Right cardiac atrium (tissue), 5 donors: ENCODE measurements at regions of chr15 and their contacts with region 1.

Region 1: GRCh38 chr15:48459571-48460470 is 128.6 kb downstream of the DUT start:
- DNase-seq: no peak
- ATAC-seq: peak in 1 of 2 donors; percentile 53
- H3K4me3 ChIP-seq: no peak overlapping the region
- H3K27ac ChIP-seq: no peak overlapping the region
- H3K4me1 ChIP-seq: no peaks in the 10 kb centered on the region
- H3K27me3 ChIP-seq: no peaks in the 10 kb centered on the region

Region 2: GRCh38 chr15:48352474-48353072 is 107.2 kb before region 1 on chr15:
- intact Hi-C with region 1: loop called in 1 of 4 experiments (anchors 10 kb)
- DNase-seq: peak in 2 of 3 donors; percentile 26 to 72
- ATAC-seq: peak; percentile 79 to 82
- H3K4me3 ChIP-seq: no peak overlapping the region
- H3K27ac ChIP-seq: no peak overlapping the region
- H3K4me1 ChIP-seq: no peaks in the 10 kb centered on the region
- H3K27me3 ChIP-seq: no peaks in the 10 kb centered on the region

Region 3: DNA sequence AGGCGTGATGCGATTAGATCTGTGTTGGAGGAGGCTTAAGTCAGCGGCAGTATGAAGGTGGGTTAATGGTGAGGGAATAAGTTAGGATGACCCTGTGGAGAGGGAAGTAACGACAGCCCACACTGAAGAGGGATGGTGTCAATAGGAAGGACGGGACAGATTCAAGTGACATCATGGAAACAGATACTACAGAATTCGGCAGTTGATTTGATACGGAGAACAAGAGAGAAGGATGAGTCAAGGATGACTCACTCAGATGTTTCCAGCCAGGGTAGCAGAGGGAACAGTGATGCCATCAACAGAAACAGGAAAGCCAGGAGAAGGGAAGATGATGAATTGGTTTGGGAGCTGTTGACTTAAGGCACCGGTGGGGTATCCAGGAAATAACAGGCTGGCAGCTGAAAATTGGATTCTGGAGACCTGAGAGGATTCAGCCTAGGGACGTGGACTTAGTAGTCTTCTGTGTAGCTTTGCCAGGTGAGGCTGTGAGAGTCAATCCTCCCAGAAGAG is 465.9 kb after region 1 on chr15:
- intact Hi-C with region 1: loop called in 1 of 4 experiments (anchors 10 kb)
- DNase-seq: no peak
- ATAC-seq: peak; percentile 67 to 86
- H3K4me3 ChIP-seq: no peak overlapping the region
- H3K27ac ChIP-seq: peak overlapping the region; percentile 32
- H3K4me1 ChIP-seq: no peaks in the 10 kb centered on the region
- H3K27me3 ChIP-seq: no peaks in the 10 kb centered on the region